HepG2 (cell line): ENCODE measurements at regions of chr17 and their contacts with region 1.

Region 1: DNA sequence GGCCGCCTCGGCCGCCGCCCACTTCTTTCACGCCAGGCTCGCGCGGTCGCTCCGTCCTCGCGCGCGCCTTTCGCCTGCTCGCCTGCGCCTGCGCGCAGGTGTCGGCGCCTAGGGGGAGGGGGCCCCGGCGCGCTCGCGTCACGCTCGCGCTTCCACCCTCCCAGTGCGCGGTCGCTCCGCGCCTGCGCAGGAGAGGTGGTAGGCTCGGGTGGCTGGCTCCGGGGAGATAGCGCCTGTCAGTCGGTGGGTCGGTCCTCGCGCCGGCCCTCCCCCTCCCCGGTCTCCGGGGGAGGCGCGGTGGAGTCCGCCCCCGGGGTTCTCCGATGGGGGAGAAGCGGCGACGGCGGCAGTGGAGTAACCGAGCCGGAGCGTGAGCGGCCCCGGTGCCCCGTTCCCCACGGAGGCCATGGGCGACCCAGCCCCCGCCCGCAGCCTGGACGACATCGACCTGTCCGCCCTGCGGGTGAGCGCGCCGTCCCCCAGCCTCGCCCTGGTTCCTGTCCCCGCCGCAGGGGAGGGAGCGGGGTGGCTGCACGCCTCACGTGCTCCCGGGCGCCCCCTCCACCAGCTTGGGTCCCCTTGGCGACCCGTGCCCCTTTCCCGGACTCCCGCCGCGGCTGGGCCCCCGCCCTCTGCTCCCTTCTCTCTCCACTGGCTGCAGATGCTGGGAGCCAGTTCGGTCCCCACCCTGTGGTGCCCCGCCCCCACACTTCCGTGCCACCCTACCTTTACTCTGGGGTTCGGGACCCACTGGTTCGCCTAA is at the start of gene MINK1:
- DNase-seq: peak; percentile 84
- ATAC-seq: peak; percentile 78
- H3K4me3 ChIP-seq: peak within 1 kb of the TSS; percentile 67 to 97 (median 85)
- H3K27ac ChIP-seq: peak within 1 kb of the TSS; percentile 75
- H3K4me1 ChIP-seq: peaks cover 41% of the 10 kb centered on the region
- H3K27me3 ChIP-seq: no peaks in the 10 kb centered on the region
- CTCF ChIP-seq: no peak
- EP300 ChIP-seq: no peak
- POLR2A ChIP-seq: peak in 1 of 2 experiments; percentile 78; a peak in 3 of 4 replicates
- RAD21 ChIP-seq: 0 out of 2 replicates have a peak, but pooled peaks have one; percentile 10
- total RNA-seq, gene MINK1: 15.2 and 17.2 TPM in 2 replicates

Region 2: GRCh38 chr17:4806777-4807604 is 26.4 kb before region 1 on chr17 and contains the start of gene PLD2:
- CTCF ChIA-PET with region 1: no interaction called
- POLR2A ChIA-PET with region 1: interaction called, 10 read pairs
- in situ Hi-C with region 1: no loop called
- intact Hi-C with region 1: no loop called
- DNase-seq: peak; percentile 69
- ATAC-seq: peak; percentile 97
- H3K4me3 ChIP-seq: peak within 1 kb of the TSS; percentile 80 to 96 (median 92)
- H3K27ac ChIP-seq: peak within 1 kb of the TSS; percentile 49
- H3K4me1 ChIP-seq: peaks cover 29% of the 10 kb centered on the region
- H3K27me3 ChIP-seq: no peaks in the 10 kb centered on the region
- CTCF ChIP-seq: no peak; the same call in 1 of the 2 replicates
- EP300 ChIP-seq: no peak
- POLR2A ChIP-seq: peak; percentile 74 to 81
- RAD21 ChIP-seq: peak; percentile 55; the same call in 1 of the 2 replicates
- total RNA-seq, gene PLD2: 7.8 and 13.4 TPM in 2 replicates

Region 3: GRCh38 chr17:4858882-4859260 is 25.5 kb after region 1 on chr17:
- CTCF ChIA-PET with region 1: no interaction called
- POLR2A ChIA-PET with region 1: interaction called, 12 read pairs
- in situ Hi-C with region 1: no loop called
- intact Hi-C with region 1: no loop called
- DNase-seq: no peak
- ATAC-seq: no peak
- H3K4me3 ChIP-seq: no peak overlapping the region
- H3K27ac ChIP-seq: peak overlapping the region; percentile 51
- H3K4me1 ChIP-seq: peaks cover 66% of the 10 kb centered on the region
- H3K27me3 ChIP-seq: no peaks in the 10 kb centered on the region
- CTCF ChIP-seq: no peak
- EP300 ChIP-seq: no peak
- POLR2A ChIP-seq: no peak
- RAD21 ChIP-seq: no peak

Region 4: GRCh38 chr17:4881761-4882555 is 48.6 kb after region 1 on chr17:
- CTCF ChIA-PET with region 1: no interaction called
- POLR2A ChIA-PET with region 1: no interaction called
- in situ Hi-C with region 1: no loop called
- intact Hi-C with region 1: loop called (anchors 10 kb)
- DNase-seq: peak; percentile 41
- ATAC-seq: peak; percentile 90
- H3K4me3 ChIP-seq: no peak overlapping the region
- H3K27ac ChIP-seq: no peak overlapping the region
- H3K4me1 ChIP-seq: no peaks in the 10 kb centered on the region
- H3K27me3 ChIP-seq: no peaks in the 10 kb centered on the region
- CTCF ChIP-seq: peak; percentile 88
- EP300 ChIP-seq: no peak
- POLR2A ChIP-seq: no peak
- RAD21 ChIP-seq: peak; percentile 84

Region 5: DNA sequence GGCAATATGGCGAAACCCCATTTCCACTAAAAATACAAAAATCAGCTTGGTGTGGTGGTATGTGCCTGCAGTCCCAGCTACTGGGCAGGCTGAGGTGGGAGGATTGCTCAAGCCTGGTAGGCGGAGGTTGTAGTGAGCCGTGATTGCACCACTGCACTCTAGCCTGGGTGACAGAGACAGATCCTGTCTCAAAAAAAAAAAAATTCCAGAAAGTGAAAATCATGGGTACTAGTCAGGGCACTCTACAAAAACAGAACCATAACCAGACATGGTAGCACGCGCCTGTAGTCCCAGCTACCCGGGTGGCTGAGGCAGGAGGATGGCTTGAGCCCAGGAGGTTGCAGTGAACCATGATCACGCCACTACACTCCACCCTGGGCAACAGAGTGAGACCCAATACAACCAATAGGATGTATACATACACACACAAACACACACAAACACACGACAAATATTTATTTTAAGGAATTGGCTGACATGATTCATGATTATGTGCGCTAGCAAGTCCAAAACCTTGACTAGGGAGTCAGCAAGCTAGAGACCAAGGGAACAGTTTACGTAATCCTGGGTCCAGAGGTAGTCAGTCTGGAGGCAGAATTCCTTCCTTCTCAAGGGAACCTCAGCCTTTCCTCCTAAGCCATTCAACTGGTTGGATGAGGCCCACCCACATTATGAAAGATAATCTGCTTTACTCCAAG is 87.1 kb after region 1 on chr17:
- CTCF ChIA-PET with region 1: no interaction called
- POLR2A ChIA-PET with region 1: no interaction called
- in situ Hi-C with region 1: no loop called
- intact Hi-C with region 1: no loop called
- DNase-seq: peak; percentile 65
- ATAC-seq: peak; percentile 95
- H3K4me3 ChIP-seq: peak overlapping the region; percentile 14 to 57 (median 26)
- H3K27ac ChIP-seq: peak overlapping the region; percentile 53
- H3K4me1 ChIP-seq: peaks cover 22% of the 10 kb centered on the region
- H3K27me3 ChIP-seq: no peaks in the 10 kb centered on the region
- CTCF ChIP-seq: no peak
- EP300 ChIP-seq: no peak
- POLR2A ChIP-seq: peak in 1 of 2 experiments; percentile 14; a peak in 1 of 4 replicates
- RAD21 ChIP-seq: no peak

Region 6: GRCh38 chr17:5138616-5139457 is 305.5 kb after region 1 on chr17:
- CTCF ChIA-PET with region 1: no interaction called
- POLR2A ChIA-PET with region 1: no interaction called
- in situ Hi-C with region 1: no loop called
- intact Hi-C with region 1: no loop called
- DNase-seq: no peak
- ATAC-seq: no peak
- H3K4me3 ChIP-seq: no peak overlapping the region
- H3K27ac ChIP-seq: no peak overlapping the region
- H3K4me1 ChIP-seq: peaks cover 20% of the 10 kb centered on the region
- H3K27me3 ChIP-seq: peaks cover 2 to 11% of the 10 kb centered on the region in 2 experiments; a peak in 3 of 5 replicates
- CTCF ChIP-seq: no peak
- EP300 ChIP-seq: no peak
- POLR2A ChIP-seq: no peak
- RAD21 ChIP-seq: no peak